ENCODE measurements at regions of chrX and their contacts with region 1.

Region 1: DNA sequence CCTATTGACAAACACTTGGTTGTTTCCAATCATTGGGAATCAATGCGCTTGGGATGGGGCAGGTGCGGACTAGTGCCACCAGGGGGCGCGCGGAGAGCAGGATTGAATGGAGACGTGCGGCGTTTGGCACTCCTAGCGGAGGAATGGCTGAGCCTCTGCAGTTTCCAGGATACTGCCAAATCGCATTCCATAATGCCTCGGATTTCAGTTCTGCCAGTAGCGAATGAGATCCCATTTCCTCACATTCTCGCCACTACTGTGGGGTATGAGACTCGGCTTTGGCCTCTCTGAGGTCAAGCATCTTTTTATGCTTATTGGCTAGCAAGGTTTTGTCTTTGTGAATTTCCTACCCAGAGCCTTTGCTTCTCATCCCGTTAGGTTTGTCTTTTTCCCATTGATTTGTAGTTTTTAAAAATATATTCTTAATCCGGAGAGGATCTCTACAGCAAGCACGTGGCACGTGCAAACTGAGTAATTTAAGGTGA is 28.7 kb downstream of the CLDN34 start:
- DNase-seq: peak; percentile 81
- H3K4me3 ChIP-seq: no peak overlapping the region
- H3K27ac ChIP-seq: peak overlapping the region; percentile 42
- H3K4me1 ChIP-seq: peaks cover 4% of the 10 kb centered on the region
- H3K27me3 ChIP-seq: no peaks in the 10 kb centered on the region
- CTCF ChIP-seq: peak; percentile 90

Region 2: GRCh38 chrX:10119399-10119990 is 123.6 kb after region 1 on chrX:
- intact Hi-C with region 1: loop called (anchors 5 kb)
- DNase-seq: no peak
- H3K4me3 ChIP-seq: no peak overlapping the region
- H3K27ac ChIP-seq: peak overlapping the region; percentile 51
- H3K4me1 ChIP-seq: peaks cover 35% of the 10 kb centered on the region
- H3K27me3 ChIP-seq: no peaks in the 10 kb centered on the region
- CTCF ChIP-seq: peak; percentile 96

Region 3: DNA sequence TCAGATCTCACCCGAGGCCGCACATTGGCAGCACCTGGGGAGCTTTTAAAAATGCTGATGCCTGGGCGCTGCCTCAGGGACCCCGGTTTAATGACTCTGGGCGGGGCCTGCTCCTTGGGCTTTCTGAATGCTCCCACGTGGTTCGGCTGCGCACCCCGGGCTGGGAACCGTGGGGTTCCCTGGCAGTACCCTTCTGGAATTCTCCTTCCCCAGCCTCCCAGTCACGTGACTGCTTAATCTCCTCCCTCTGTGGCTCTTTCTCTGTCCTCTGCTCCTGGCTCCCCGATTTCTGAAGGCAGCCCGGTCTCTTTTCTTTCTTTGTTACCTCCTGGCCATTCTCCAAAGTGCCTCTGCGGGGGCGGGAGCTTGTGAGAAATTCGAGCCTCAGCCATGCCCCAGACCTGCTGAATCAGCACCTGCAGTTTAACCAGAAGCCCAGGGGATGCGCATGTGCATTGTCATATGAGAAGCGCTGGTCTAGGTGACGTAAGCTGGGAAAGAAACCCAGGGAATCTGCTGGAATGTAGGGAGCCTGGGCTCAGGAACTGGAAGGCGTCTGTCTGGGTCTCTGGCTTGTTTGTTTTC is 177.5 kb after region 1 on chrX:
- intact Hi-C with region 1: no loop called
- DNase-seq: no peak
- H3K4me3 ChIP-seq: no peak overlapping the region
- H3K27ac ChIP-seq: no peak overlapping the region
- H3K4me1 ChIP-seq: peaks cover 28% of the 10 kb centered on the region
- H3K27me3 ChIP-seq: no peaks in the 10 kb centered on the region
- CTCF ChIP-seq: no peak

Measured in left ventricle myocardium inferior (tissue), 1 donor.